ENCODE measurements at regions of chr11 and their contacts with region 1.

Region 1: DNA sequence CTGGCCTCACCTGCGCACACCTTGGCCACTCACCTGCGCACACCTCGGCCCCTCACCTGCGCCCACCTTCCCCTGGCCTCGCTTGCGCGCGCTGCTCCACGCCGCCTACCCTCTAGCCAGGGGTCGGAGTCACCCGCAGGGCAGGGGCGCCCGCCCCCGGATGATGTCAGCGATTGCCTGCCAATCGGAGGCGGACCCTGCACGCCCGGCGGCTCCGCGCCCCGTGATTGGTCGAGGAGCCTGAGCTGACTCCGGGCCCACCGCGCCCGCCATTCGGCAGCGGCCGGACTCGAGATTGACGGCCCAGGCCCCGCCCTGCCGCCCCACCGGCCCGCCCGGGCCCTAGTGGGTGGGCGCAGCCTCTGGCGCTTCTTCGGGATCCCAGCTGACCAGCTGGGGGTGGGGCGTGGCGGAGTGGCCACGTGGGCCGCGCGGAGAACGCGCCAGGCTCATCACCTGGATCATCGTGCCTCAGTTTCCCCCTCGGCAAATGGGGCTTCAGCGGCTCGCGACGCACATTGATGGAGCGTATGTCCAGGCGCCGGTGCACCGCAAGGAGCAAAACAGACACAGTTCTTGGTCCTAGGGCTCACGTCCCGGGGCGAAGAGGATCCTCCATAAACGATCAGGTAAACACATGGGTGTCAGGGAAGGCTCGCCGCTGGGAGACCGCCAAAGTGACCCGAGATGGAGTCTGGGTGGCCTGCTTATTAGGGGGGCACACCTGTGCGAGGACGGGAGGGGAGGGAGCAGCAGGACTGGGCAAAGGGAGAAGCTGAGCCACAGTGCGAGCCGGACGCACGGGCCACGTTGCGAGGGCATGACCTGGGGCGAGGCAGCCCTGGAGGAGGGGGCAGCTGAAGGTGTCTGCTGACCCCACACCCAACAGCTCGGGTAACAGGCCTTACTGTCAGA is at the start of gene DHCR7:
- DNase-seq: peak; percentile 96
- H3K4me3 Mint-ChIP-seq: peak within 1 kb of the TSS; percentile 94
- H3K27ac Mint-ChIP-seq: peak within 1 kb of the TSS; percentile 79
- H3K4me1 Mint-ChIP-seq: peaks cover 54% of the 10 kb centered on the region
- H3K27me3 Mint-ChIP-seq: no peaks in the 10 kb centered on the region
- total RNA-seq, gene DHCR7: 61.4 to 63.5 TPM

Region 2: DNA sequence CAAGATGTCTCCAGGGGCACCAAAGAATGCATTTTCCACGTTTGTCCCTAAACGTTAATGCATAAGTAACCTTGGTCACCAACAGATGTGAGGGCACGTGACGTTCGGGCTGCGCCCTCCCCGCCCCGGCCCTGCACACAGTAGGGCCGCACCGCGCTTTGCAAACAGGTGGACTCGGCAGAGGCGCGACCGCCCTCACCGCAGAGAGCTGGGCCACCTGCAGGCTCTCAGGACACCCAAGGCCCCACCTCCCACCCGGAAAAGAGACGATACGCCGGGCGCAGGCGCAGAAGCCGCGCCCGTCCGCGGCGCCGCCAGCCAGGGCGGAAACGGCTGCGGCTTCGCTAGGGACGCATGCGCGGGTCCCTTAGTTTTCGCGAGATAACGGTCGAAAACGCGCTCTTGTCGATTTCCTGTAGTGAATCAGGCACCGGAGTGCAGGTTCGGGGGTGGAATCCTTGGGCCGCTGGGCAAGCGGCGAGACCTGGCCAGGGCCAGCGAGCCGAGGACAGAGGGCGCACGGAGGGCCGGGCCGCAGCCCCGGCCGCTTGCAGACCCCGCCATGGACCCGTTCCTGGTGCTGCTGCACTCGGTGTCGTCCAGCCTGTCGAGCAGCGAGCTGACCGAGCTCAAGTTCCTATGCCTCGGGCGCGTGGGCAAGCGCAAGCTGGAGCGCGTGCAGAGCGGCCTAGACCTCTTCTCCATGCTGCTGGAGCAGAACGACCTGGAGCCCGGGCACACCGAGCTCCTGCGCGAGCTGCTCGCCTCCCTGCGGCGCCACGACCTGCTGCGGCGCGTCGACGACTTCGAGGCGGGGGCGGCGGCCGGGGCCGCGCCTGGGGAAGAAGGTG is 1245.4 kb before region 1 on chr11 and contains the start of gene FADD:
- CTCF ChIA-PET with region 1: no interaction called
- POLR2A ChIA-PET with region 1: no interaction called
- intact Hi-C with region 1: loop called (anchors 5 kb)
- DNase-seq: peak; percentile 95
- H3K4me3 Mint-ChIP-seq: peak within 1 kb of the TSS; percentile 96
- H3K27ac Mint-ChIP-seq: peak within 1 kb of the TSS; percentile 99
- H3K4me1 Mint-ChIP-seq: peaks cover 37% of the 10 kb centered on the region
- H3K27me3 Mint-ChIP-seq: peaks cover 2% of the 10 kb centered on the region
- total RNA-seq, gene FADD: 31.8 to 33.9 TPM

Region 3: GRCh38 chr11:71372693-71373657 is 75.5 kb before region 1 on chr11:
- CTCF ChIA-PET with region 1: no interaction called
- POLR2A ChIA-PET with region 1: no interaction called
- intact Hi-C with region 1: no loop called
- DNase-seq: no peak
- H3K4me3 Mint-ChIP-seq: no peak overlapping the region
- H3K27ac Mint-ChIP-seq: no peak overlapping the region
- H3K4me1 Mint-ChIP-seq: no peaks in the 10 kb centered on the region
- H3K27me3 Mint-ChIP-seq: peaks cover 18% of the 10 kb centered on the region

Region 4: GRCh38 chr11:71489311-71490048 is 41.0 kb after region 1 on chr11:
- CTCF ChIA-PET with region 1: no interaction called
- POLR2A ChIA-PET with region 1: interaction called, 4 read pairs
- intact Hi-C with region 1: loop called (anchors 5 kb)
- DNase-seq: peak; percentile 87
- H3K4me3 Mint-ChIP-seq: no peak overlapping the region
- H3K27ac Mint-ChIP-seq: peak overlapping the region; percentile 90
- H3K4me1 Mint-ChIP-seq: peaks cover 25% of the 10 kb centered on the region
- H3K27me3 Mint-ChIP-seq: no peaks in the 10 kb centered on the region

Region 5: DNA sequence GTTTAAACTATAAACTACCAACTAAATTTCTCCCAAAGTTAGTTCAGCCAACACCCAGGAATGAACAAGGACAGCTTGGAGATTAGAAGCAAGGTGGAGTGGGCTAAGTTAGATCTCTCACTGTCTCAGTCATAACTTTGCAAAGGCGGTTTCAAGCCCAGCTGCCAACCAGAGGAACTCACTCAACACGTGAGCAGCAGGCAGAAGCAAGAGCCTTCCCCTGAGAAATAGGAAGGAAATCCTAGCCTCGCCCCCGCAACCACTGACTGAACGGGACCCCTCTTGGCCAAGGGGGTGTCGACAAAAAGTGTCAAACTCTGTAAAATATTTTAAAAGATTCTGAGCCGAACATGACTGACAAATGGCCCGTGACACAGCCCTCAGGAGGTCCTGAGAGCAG is 95.4 kb after region 1 on chr11:
- CTCF ChIA-PET with region 1: no interaction called
- POLR2A ChIA-PET with region 1: no interaction called
- intact Hi-C with region 1: loop called (anchors 10 kb)
- DNase-seq: peak; percentile 10
- H3K4me3 Mint-ChIP-seq: no peak overlapping the region
- H3K27ac Mint-ChIP-seq: no peak overlapping the region
- H3K4me1 Mint-ChIP-seq: peaks cover 21% of the 10 kb centered on the region
- H3K27me3 Mint-ChIP-seq: peaks cover 42% of the 10 kb centered on the region

Region 6: GRCh38 chr11:71787098-71787823 is 338.7 kb after region 1 on chr11:
- CTCF ChIA-PET with region 1: no interaction called
- POLR2A ChIA-PET with region 1: no interaction called
- intact Hi-C with region 1: loop called (anchors 2 kb)
- DNase-seq: peak; percentile 97
- H3K4me3 Mint-ChIP-seq: peak overlapping the region; percentile 92
- H3K27ac Mint-ChIP-seq: peak overlapping the region; percentile 95
- H3K4me1 Mint-ChIP-seq: peaks cover 22% of the 10 kb centered on the region
- H3K27me3 Mint-ChIP-seq: no peaks in the 10 kb centered on the region

Measured in activated CD4-positive, alpha-beta memory T cell treated with anti-CD3 and anti-CD28 coated beads for 36 hours (primary cell).